Natural killer cell (primary cell): ENCODE measurements at regions of chr11 and their contacts with region 1.

Region 1: DNA sequence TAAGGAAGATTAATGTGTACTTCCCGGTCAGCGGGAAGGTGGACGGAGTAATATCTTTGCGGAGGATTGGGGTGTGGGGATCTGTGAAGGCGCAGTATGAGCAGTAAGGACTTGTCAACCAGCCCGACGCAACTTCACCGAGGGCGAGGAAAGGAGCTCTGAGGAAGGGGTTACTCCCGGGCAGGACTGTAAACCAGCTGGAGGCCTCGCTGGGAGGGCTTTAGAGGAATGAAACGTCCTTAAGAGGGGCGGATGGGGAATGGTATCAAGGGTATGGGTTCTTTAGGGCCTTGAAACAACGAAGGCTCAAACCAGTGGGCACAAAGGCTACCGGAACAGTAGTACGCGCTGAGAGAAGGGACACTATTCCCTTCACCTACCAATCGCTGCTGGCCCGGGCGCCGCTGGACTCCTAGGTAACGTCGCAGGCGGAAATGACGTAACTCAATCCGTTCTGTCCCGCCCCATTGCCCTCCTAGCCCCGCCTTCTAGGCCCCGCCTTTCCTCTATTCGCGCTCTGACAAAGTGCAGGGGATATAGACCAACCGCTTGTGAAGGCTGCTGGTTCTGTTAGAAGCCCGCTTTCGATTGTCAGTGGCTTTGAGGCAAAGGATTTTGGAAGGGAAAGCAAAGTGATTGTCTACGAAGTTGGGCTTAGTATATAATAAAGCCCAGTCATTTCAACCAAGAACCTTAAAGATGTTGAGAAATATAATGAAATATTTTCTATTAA is at the start of gene C11orf65:
- DNase-seq: peak; percentile 96 to 99
- ATAC-seq: peak; percentile 95 to 99 (median 96)
- H3K4me3 ChIP-seq: peak within 1 kb of the TSS; percentile 85
- H3K4me3 Mint-ChIP-seq: peak within 1 kb of the TSS; percentile 99
- H3K27ac ChIP-seq: peak within 1 kb of the TSS; percentile 99
- H3K27ac Mint-ChIP-seq: peak within 1 kb of the TSS; percentile 99
- H3K4me1 ChIP-seq: peaks cover 11% of the 10 kb centered on the region
- H3K4me1 Mint-ChIP-seq: peaks cover 10 to 12% of the 10 kb centered on the region in 2 donors
- H3K27me3 ChIP-seq: no peaks in the 10 kb centered on the region
- H3K27me3 Mint-ChIP-seq: no peaks in the 10 kb centered on the region
- CTCF ChIP-seq: no peak
- total RNA-seq, gene C11orf65: 0.14 to 0.68 (median 0.45) TPM

Region 2: GRCh38 chr11:108008656-108009496 is 458.4 kb before region 1 on chr11 and contains the start of gene CUL5:
- intact Hi-C with region 1: loop called (anchors 2 kb)
- DNase-seq: peak; percentile 88 to 95
- ATAC-seq: peak; percentile 81 to 92 (median 88)
- H3K4me3 ChIP-seq: peak within 1 kb of the TSS; percentile 90
- H3K4me3 Mint-ChIP-seq: peak within 1 kb of the TSS; percentile 99
- H3K27ac ChIP-seq: peak within 1 kb of the TSS; percentile 93
- H3K27ac Mint-ChIP-seq: peak within 1 kb of the TSS; percentile 98
- H3K4me1 ChIP-seq: peaks cover 3% of the 10 kb centered on the region
- H3K4me1 Mint-ChIP-seq: peaks cover 21 to 25% of the 10 kb centered on the region in 2 donors
- H3K27me3 ChIP-seq: no peaks in the 10 kb centered on the region
- H3K27me3 Mint-ChIP-seq: no peaks in the 10 kb centered on the region
- CTCF ChIP-seq: peak; percentile 72
- total RNA-seq, gene CUL5: 59.1 to 68.3 (median 60.2) TPM

Region 3: GRCh38 chr11:108222686-108223448 is 244.4 kb before region 1 on chr11 and contains the start of gene ATM:
- intact Hi-C with region 1: loop called (anchors 5 kb)
- DNase-seq: peak; percentile 98 to 100
- ATAC-seq: peak; percentile 76 to 94 (median 85)
- H3K4me3 ChIP-seq: peak within 1 kb of the TSS; percentile 65
- H3K4me3 Mint-ChIP-seq: no peak within 1 kb of the TSS
- H3K27ac ChIP-seq: peak within 1 kb of the TSS; percentile 88
- H3K27ac Mint-ChIP-seq: no peak within 1 kb of the TSS
- H3K4me1 ChIP-seq: peaks cover 11% of the 10 kb centered on the region
- H3K4me1 Mint-ChIP-seq: peaks cover 61 to 64% of the 10 kb centered on the region in 2 donors
- H3K27me3 ChIP-seq: no peaks in the 10 kb centered on the region
- H3K27me3 Mint-ChIP-seq: no peaks in the 10 kb centered on the region
- CTCF ChIP-seq: peak; percentile 64
- total RNA-seq, gene ATM: 502 to 568 (median 539) TPM

Region 4: DNA sequence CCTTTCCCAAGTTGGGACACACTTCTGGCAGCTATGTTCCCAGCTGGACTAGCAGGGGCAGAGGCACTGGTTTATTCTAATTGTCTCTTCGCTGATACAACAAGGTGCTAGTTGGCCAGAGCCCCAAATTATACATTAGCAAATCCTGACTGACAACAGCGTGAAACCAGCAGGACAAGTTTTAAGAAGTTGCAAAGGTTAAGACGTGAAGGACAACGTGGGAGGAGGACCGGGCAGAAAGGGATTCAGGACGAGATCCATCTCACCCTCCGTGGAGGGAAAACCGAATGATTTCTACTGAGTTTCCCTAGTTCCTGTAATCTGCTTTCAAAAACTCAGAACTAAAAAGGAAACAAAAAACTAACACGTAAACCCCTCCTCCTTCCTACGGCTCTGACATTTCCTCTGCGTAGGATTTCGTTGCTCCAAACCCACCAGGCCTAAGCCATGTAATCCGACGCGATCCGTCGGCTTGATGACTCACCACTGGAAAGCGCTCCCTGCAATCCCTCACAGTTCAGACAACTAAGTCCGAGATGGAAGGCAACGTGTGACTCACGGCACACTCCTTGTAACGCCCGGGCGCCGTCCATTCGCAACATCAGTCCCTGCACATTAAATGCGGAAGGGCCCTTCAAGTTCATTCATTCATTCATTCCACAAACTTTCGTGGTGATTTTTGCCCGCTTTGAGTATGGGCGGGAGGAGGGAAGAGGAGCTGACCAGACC is 30.2 kb after region 1 on chr11:
- intact Hi-C with region 1: loop called (anchors 1 kb)
- DNase-seq: peak; percentile 62 to 87
- ATAC-seq: peak; percentile 68 to 85 (median 81)
- H3K4me3 ChIP-seq: peak overlapping the region; percentile 54
- H3K4me3 Mint-ChIP-seq: peak overlapping the region; percentile 89
- H3K27ac ChIP-seq: peak overlapping the region; percentile 85
- H3K27ac Mint-ChIP-seq: peak overlapping the region; percentile 85 to 99
- H3K4me1 ChIP-seq: peaks cover 18% of the 10 kb centered on the region
- H3K4me1 Mint-ChIP-seq: peaks cover 22 to 25% of the 10 kb centered on the region in 2 donors
- H3K27me3 ChIP-seq: no peaks in the 10 kb centered on the region
- H3K27me3 Mint-ChIP-seq: no peaks in the 10 kb centered on the region
- CTCF ChIP-seq: no peak

Region 5: GRCh38 chr11:108538022-108538424 is 70.8 kb after region 1 on chr11:
- intact Hi-C with region 1: loop called (anchors 1 kb)
- DNase-seq: peak; percentile 49 to 61
- ATAC-seq: peak; percentile 87 to 96 (median 89)
- H3K4me3 ChIP-seq: no peak overlapping the region
- H3K4me3 Mint-ChIP-seq: peak overlapping the region; percentile 81
- H3K27ac ChIP-seq: peak overlapping the region; percentile 47
- H3K27ac Mint-ChIP-seq: peak overlapping the region; percentile 87 to 89
- H3K4me1 ChIP-seq: peaks cover 7% of the 10 kb centered on the region
- H3K4me1 Mint-ChIP-seq: peaks cover 14 to 22% of the 10 kb centered on the region in 2 donors
- H3K27me3 ChIP-seq: no peaks in the 10 kb centered on the region
- H3K27me3 Mint-ChIP-seq: peaks cover 0 to 3% of the 10 kb centered on the region in 2 donors
- CTCF ChIP-seq: no peak

Region 6: GRCh38 chr11:108593214-108593922 is 126.1 kb after region 1 on chr11 and contains the start of gene EXPH5:
- intact Hi-C with region 1: loop called (anchors 1 kb)
- DNase-seq: peak; percentile 53 to 90
- ATAC-seq: peak; percentile 86 to 93 (median 89)
- H3K4me3 ChIP-seq: peak within 1 kb of the TSS; percentile 80
- H3K4me3 Mint-ChIP-seq: peak within 1 kb of the TSS; percentile 100
- H3K27ac ChIP-seq: peak within 1 kb of the TSS; percentile 25
- H3K27ac Mint-ChIP-seq: peak within 1 kb of the TSS; percentile 87 to 97
- H3K4me1 ChIP-seq: peaks cover 9% of the 10 kb centered on the region
- H3K4me1 Mint-ChIP-seq: peaks cover 18 to 19% of the 10 kb centered on the region in 2 donors
- H3K27me3 ChIP-seq: peaks cover 11% of the 10 kb centered on the region
- H3K27me3 Mint-ChIP-seq: peaks cover 26 to 38% of the 10 kb centered on the region in 2 donors
- CTCF ChIP-seq: no peak
- total RNA-seq, gene EXPH5: 1.5 to 5.4 (median 2.6) TPM

Region 7: DNA sequence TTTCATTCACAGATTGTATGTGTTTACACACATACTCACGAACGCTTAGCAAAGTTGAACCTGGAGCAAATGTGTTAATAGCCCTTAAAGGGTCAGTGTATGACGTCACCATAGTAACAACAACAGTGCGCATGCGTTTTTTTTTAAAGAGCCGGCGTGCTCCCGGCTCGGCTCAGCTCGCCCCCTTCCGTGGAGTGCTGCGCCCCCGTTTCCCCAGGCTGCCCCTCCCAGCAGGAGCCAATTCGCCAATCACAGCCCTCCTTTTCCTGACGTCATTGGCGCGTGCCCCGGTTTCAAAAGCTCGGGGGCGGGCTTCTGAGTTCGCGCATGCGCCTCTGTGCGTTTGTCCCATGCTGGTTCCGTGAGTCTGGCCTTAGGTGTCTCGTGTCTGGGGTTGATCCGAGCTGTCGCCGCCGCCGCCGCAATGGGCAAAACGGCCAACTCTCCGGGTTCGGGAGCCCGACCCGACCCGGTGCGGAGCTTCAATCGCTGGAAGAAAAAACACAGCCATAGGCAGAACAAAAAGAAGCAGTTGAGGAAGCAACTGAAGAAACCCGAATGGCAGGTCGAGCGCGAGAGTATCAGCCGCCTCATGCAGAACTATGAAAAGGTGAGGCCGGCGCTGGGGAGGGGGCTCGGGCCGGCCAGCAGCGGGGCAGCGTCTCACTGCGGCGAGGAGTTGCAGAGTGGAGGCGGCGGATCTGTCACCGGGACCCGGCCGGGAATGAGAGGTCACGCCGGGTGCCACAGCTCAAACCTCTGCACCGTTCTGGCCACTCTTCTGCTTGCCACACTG is 197.7 kb after region 1 on chr11 and contains the start of gene DDX10:
- intact Hi-C with region 1: loop called (anchors 1 kb)
- DNase-seq: peak; percentile 99 to 100
- ATAC-seq: peak; percentile 99
- H3K4me3 ChIP-seq: peak within 1 kb of the TSS; percentile 93
- H3K4me3 Mint-ChIP-seq: peak within 1 kb of the TSS; percentile 100
- H3K27ac ChIP-seq: peak within 1 kb of the TSS; percentile 54
- H3K27ac Mint-ChIP-seq: peak within 1 kb of the TSS; percentile 97 to 98
- H3K4me1 ChIP-seq: peaks cover 17% of the 10 kb centered on the region
- H3K4me1 Mint-ChIP-seq: peaks cover 38 to 51% of the 10 kb centered on the region in 2 donors
- H3K27me3 ChIP-seq: no peaks in the 10 kb centered on the region
- H3K27me3 Mint-ChIP-seq: no peaks in the 10 kb centered on the region
- CTCF ChIP-seq: no peak
- total RNA-seq, gene DDX10: 23.4 to 30.9 (median 24.9) TPM